PC-3 (cell line): ENCODE measurements at regions of chr3 and their contacts with region 1.

Region 1: GRCh38 chr3:12294885-12295580 is 6.2 kb downstream of the PPARG start:
- DNase-seq: peak; percentile 80
- ATAC-seq: peak; percentile 55
- H3K4me3 ChIP-seq: no peak overlapping the region
- H3K27ac ChIP-seq: peak overlapping the region; percentile 46
- H3K4me1 ChIP-seq: peaks cover 64% of the 10 kb centered on the region
- H3K27me3 ChIP-seq: no peaks in the 10 kb centered on the region
- CTCF ChIP-seq: no peak

Region 2: GRCh38 chr3:12349895-12350813 is 55.1 kb after region 1 on chr3:
- CTCF ChIA-PET with region 1: no interaction called
- POLR2A ChIA-PET with region 1: interaction called, 4 read pairs
- intact Hi-C with region 1: loop called (anchors 2 kb)
- DNase-seq: no peak
- ATAC-seq: no peak
- H3K4me3 ChIP-seq: no peak overlapping the region
- H3K27ac ChIP-seq: no peak overlapping the region
- H3K4me1 ChIP-seq: peaks cover 56% of the 10 kb centered on the region
- H3K27me3 ChIP-seq: no peaks in the 10 kb centered on the region
- CTCF ChIP-seq: no peak